Activated naive CD8-positive, alpha-beta T cell treated with anti-CD3 and anti-CD28 coated beads, Interleukin-2, amount 10 ng/mL, durations not matched to agents 7 days and 5 days (primary cell): ENCODE measurements at regions of chr11 and their contacts with region 1.

Region 1: DNA sequence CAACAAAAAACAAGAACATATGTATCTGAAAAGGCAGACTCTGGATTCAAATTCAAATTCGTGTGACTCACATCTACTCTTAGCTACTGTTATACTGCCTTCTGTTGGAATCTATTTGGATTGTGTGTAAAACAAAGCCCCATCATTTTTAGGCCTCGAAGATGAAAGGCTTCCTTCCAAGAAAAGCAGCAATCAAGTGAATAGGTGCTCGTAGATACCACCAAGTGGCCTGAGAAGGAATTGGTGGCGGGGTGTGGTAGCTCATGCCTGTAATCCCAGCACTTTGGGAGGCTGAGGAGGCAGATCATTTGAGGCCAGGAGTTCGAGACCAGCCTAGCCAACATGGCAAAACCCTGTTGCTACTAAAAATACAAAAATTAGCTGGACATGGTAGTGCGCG is 4.2 kb downstream of the GRAMD1B start:
- DNase-seq: no peak
- ATAC-seq: no peak
- H3K4me3 Mint-ChIP-seq: peak overlapping the region; percentile 16
- H3K27ac Mint-ChIP-seq: peak overlapping the region; percentile 62
- H3K4me1 Mint-ChIP-seq: peaks cover 72% of the 10 kb centered on the region
- H3K27me3 Mint-ChIP-seq: no peaks in the 10 kb centered on the region

Region 2: GRCh38 chr11:123219066-123219690 is 215.1 kb before region 1 on chr11:
- POLR2A ChIA-PET with region 1: no interaction called
- DNase-seq: no peak
- ATAC-seq: no peak
- H3K4me3 Mint-ChIP-seq: no peak overlapping the region
- H3K27ac Mint-ChIP-seq: no peak overlapping the region
- H3K4me1 Mint-ChIP-seq: no peaks in the 10 kb centered on the region
- H3K27me3 Mint-ChIP-seq: peaks cover 26% of the 10 kb centered on the region

Region 3: DNA sequence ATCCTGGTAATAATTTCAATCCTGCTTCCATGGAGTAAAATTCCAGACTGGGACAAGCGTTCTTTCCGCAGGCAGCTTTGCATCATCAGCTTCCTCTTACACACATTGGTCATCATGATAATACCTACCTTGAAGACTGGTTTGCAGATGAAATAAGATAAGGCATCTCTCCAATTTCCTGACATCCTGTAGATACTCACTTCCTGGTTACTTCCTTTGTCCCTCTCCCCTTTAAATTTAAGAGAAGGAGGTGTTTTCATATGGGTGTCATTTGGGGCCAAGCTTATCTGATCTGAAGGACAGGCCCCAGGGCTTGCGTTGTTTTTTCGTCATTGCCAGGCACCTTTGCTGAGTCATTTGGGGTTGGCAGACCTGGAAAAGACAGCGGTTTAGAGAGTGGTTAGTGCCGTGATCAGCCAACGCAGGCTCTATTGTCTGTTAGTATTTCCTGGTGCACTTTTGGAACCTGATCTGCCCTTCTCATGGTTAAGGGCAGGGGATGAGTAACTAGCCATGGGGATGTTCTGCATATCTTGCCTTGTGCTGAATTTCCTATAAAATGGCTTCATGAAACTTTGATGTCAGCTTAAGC is 19.9 kb after region 1 on chr11:
- POLR2A ChIA-PET with region 1: interaction called, 15 read pairs
- DNase-seq: no peak
- ATAC-seq: peak; percentile 55
- H3K4me3 Mint-ChIP-seq: peak overlapping the region; percentile 73
- H3K27ac Mint-ChIP-seq: peak overlapping the region; percentile 88
- H3K4me1 Mint-ChIP-seq: peaks cover 68% of the 10 kb centered on the region
- H3K27me3 Mint-ChIP-seq: no peaks in the 10 kb centered on the region